ENCODE measurements at regions of chr5 and their contacts with region 1.

Region 1: DNA sequence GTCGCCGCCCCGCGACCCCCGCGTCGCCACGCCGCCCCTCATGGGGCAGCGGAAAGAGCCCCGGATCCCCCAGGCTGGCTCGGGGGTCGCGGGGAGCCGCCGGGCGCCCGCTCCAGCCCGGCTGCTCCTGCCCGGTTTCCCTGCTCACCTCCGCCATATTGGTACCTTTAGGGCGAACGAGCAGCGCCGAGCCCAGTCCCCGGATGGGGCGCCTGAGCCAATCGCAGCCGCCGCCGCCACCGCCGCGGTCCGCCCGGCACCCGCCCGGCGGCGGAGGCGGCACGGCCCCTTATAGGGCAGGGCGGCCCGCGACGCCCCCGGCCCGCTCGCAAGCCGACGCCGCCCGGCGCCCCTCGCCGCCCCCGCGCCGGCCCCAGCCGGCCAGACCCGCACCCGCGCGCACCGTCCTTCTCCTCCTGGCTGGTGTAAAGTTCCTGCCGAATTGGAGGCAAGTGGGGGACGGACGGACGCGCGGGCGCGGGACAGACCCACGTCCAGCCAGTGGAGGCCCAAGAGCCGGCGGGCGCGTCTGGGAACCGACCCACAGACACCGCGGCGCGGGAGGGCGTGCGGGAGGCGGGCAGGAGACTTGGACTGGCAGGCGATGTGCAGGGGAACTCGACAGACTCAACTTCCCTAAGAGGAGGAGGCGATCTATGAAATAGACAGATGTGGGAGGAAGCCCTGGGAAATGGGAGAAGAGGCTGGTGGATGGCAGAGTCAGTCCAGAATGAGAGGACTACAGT is at the start of gene MIER3:
- DNase-seq: peak; percentile 71
- H3K4me3 ChIP-seq: peak within 1 kb of the TSS; percentile 72 to 82 (median 77)
- H3K27ac ChIP-seq: peak within 1 kb of the TSS; percentile 49
- H3K4me1 ChIP-seq: peaks cover 12% of the 10 kb centered on the region
- H3K27me3 ChIP-seq: peaks cover 15 to 24% of the 10 kb centered on the region in 2 experiments
- CTCF ChIP-seq: no peak
- POLR2A ChIP-seq: no peak
- total RNA-seq, gene MIER3: 20.5 and 21.9 TPM in 2 replicates

Region 2: GRCh38 chr5:56876327-56876726 is 75.8 kb before region 1 on chr5:
- CTCF ChIA-PET with region 1: no interaction called
- POLR2A ChIA-PET with region 1: no interaction called
- dilution Hi-C with region 1: no loop called
- intact Hi-C with region 1: no loop called
- DNase-seq: no peak
- H3K4me3 ChIP-seq: no peak overlapping the region
- H3K27ac ChIP-seq: no peak overlapping the region
- H3K4me1 ChIP-seq: no peaks in the 10 kb centered on the region
- H3K27me3 ChIP-seq: no peaks in the 10 kb centered on the region
- CTCF ChIP-seq: no peak
- POLR2A ChIP-seq: no peak

Region 3: DNA sequence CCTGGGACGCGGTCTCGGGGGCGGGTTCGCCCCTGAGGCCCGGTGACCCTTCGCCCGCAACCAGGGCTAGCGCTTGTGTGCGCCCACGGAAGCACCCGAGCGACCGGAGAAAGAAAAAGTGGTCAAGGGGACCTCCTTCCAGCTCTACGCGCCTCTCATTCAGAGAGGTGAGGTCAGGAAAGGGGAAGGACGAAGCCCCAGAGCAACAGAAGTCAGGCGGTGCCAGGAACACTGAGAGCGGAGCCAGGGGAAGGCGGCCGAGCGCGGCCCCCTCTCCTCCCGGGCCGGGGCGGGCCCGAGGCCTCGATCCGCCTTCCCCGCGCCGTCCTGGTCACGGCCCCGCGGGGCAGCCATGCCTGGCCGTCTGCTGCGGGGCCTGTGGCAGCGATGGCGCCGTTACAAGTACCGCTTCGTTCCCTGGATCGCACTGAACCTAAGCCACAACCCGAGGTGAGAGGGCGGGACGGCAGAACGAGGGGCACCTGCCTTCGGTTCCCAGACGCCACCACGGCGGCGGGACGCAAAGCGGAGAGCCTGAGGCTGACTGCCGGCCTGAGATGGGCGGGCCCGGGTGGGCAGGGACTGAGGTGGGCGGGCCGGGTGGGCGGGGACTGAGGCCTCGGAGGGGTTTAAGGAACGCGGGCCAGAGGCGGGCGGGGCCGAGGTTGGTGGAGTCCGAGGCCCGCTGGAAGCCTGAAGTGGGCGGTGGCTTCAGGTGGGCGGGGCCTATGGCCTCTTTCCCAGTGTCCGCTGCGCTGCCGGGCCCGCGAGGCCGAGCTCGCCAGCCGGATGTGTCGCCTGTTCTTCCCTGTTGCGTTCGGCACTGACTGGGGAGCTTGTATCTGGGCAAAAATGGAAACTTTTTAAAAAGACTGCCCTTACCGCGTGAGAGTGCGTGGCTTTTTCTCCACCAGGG is 42.6 kb before region 1 on chr5 and contains the start of gene SETD9:
- CTCF ChIA-PET with region 1: no interaction called
- POLR2A ChIA-PET with region 1: interaction called, 3 read pairs
- dilution Hi-C with region 1: no loop called
- intact Hi-C with region 1: loop called (anchors 1 kb)
- DNase-seq: peak; percentile 98
- H3K4me3 ChIP-seq: peak within 1 kb of the TSS; percentile 36 to 81 (median 63)
- H3K27ac ChIP-seq: peak within 1 kb of the TSS; percentile 93
- H3K4me1 ChIP-seq: peaks cover 9% of the 10 kb centered on the region
- H3K27me3 ChIP-seq: peaks cover 0 to 3% of the 10 kb centered on the region in 2 experiments
- CTCF ChIP-seq: no peak
- POLR2A ChIP-seq: peak; percentile 97
- total RNA-seq, gene SETD9: 3.6 and 7.1 TPM in 2 replicates

Region 4: GRCh38 chr5:56983593-56984361 is 31.7 kb after region 1 on chr5:
- CTCF ChIA-PET with region 1: no interaction called
- POLR2A ChIA-PET with region 1: no interaction called
- dilution Hi-C with region 1: no loop called
- intact Hi-C with region 1: no loop called
- DNase-seq: no peak
- H3K4me3 ChIP-seq: no peak overlapping the region
- H3K27ac ChIP-seq: no peak overlapping the region
- H3K4me1 ChIP-seq: no peaks in the 10 kb centered on the region
- H3K27me3 ChIP-seq: peaks cover 9 to 13% of the 10 kb centered on the region in 2 experiments
- CTCF ChIP-seq: no peak
- POLR2A ChIP-seq: no peak

Region 5: DNA sequence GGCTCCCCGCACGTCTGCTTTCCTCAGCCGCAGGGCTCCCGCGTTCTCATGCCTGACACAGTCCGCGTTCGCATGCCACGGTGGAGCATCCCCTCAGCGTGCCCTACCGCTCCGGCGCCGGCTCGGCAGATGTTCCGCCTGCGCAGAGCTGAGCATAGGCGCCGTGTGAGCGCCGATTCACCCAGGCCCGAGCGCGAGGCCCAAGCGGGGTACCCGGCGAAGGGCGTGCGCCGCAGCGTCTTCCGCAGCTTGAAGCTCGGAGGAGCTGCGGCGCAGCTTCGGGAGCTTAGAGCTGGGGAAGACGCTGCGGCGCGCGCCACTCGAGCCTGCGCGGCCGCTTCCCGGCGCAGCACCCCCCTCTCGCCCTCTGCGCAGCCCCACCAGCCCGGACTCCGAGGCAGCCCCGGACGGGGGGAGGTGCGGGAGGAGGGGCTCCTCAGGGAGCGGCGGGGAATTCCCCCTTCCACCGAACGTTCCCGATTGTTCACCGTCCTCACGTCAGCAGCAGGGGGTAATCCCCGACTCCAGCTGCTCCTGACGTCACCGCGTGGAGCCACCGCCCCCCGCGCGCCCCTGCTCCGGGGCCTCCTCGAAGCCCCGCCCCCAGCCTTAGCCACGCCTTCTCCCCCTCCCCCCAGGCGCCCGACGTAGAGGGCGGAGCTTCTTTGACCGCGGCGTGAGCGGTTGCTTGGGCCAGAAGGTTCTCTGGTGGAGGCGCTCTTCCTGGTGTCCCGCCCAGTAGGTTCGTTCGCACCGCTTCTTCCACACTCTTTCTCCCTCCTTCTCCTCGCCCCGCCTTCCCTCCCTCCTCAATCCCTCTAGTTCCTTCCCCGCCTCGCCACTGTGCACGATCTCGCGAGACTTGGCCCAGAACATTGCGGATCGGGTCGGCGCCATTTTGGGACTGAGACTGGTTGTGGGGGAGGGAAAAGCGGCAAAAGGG is 221.3 kb after region 1 on chr5 and contains the start of gene GPBP1:
- CTCF ChIA-PET with region 1: interaction called, 4 read pairs
- POLR2A ChIA-PET with region 1: no interaction called
- dilution Hi-C with region 1: no loop called
- intact Hi-C with region 1: loop called (anchors 1 kb)
- DNase-seq: peak; percentile 99
- H3K4me3 ChIP-seq: peak within 1 kb of the TSS; percentile 77 to 96 (median 86)
- H3K27ac ChIP-seq: peak within 1 kb of the TSS; percentile 94
- H3K4me1 ChIP-seq: peaks cover 32% of the 10 kb centered on the region
- H3K27me3 ChIP-seq: no peaks in the 10 kb centered on the region
- CTCF ChIP-seq: peak in 1 of 2 donors; percentile 1
- POLR2A ChIP-seq: no peak
- total RNA-seq, gene GPBP1: 48.2 and 57.4 TPM in 2 replicates

Region 6: GRCh38 chr5:57221049-57221568 is 269.0 kb after region 1 on chr5:
- CTCF ChIA-PET with region 1: interaction called, 6 read pairs
- POLR2A ChIA-PET with region 1: no interaction called
- dilution Hi-C with region 1: no loop called
- intact Hi-C with region 1: loop called (anchors 1 kb)
- DNase-seq: peak; percentile 83
- H3K4me3 ChIP-seq: no peak overlapping the region
- H3K27ac ChIP-seq: no peak overlapping the region
- H3K4me1 ChIP-seq: peaks cover 3% of the 10 kb centered on the region
- H3K27me3 ChIP-seq: no peaks in the 10 kb centered on the region
- CTCF ChIP-seq: peak; percentile 38 to 45
- POLR2A ChIP-seq: no peak